ENCODE measurements at regions of chr6 and their contacts with region 1.

Region 1: GRCh38 chr6:134182528-134182927 is 130.1 kb upstream of the SLC2A12 start:
- DNase-seq: no peak
- CTCF ChIP-seq: no peak

Region 2: GRCh38 chr6:134235937-134236751 is 53.6 kb after region 1 on chr6:
- in situ Hi-C with region 1: loop called (anchors 10 kb)
- DNase-seq: peak; percentile 68
- CTCF ChIP-seq: no peak

Region 3: GRCh38 chr6:134331256-134331655 is 148.7 kb after region 1 on chr6:
- in situ Hi-C with region 1: no loop called
- DNase-seq: no peak
- CTCF ChIP-seq: no peak

Measured in GM13976 (cell line).